Endothelial cell of umbilical vein (primary cell): ENCODE measurements at regions of chr6 and their contacts with region 1.

Region 1: GRCh38 chr6:43021270-43022047 is at the start of gene RRP36:
- DNase-seq: peak; percentile 67
- H3K4me3 ChIP-seq: peak within 1 kb of the TSS; percentile 74 to 98 (median 89)
- H3K27ac ChIP-seq: peak within 1 kb of the TSS; percentile 58
- H3K4me1 ChIP-seq: no peaks in the 10 kb centered on the region
- H3K27me3 ChIP-seq: no peaks in the 10 kb centered on the region
- CTCF ChIP-seq: no peak
- POLR2A ChIP-seq: peak; percentile 78
- total RNA-seq, gene RRP36: 103 TPM in 2 replicates

Region 2: DNA sequence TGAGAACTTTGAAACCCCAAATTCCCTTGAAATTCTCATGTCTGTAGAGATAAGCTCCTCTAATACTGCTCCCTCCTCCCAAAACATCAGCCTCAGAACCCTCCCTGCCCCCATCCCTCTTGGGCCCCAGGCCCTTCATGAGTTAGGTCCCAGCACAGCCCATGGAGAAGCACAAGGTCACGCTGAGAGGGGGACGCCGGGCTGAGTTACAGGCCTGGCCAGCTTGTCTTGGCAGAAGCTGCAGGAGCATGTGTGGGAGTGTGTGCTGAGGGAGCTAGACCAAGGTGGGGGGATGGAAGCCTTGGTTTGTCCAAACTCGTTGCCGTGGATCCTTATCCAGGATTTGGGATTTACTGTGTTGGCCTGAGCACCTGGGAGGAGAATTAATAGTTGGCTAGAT is 114.1 kb before region 1 on chr6:
- CTCF ChIA-PET with region 1: no interaction called
- POLR2A ChIA-PET with region 1: interaction called, 12 read pairs
- dilution Hi-C with region 1: no loop called
- intact Hi-C with region 1: no loop called
- DNase-seq: no peak
- H3K4me3 ChIP-seq: no peak overlapping the region
- H3K27ac ChIP-seq: no peak overlapping the region
- H3K4me1 ChIP-seq: no peaks in the 10 kb centered on the region
- H3K27me3 ChIP-seq: peaks cover 2 to 3% of the 10 kb centered on the region in 2 experiments
- CTCF ChIP-seq: no peak
- POLR2A ChIP-seq: no peak

Region 3: DNA sequence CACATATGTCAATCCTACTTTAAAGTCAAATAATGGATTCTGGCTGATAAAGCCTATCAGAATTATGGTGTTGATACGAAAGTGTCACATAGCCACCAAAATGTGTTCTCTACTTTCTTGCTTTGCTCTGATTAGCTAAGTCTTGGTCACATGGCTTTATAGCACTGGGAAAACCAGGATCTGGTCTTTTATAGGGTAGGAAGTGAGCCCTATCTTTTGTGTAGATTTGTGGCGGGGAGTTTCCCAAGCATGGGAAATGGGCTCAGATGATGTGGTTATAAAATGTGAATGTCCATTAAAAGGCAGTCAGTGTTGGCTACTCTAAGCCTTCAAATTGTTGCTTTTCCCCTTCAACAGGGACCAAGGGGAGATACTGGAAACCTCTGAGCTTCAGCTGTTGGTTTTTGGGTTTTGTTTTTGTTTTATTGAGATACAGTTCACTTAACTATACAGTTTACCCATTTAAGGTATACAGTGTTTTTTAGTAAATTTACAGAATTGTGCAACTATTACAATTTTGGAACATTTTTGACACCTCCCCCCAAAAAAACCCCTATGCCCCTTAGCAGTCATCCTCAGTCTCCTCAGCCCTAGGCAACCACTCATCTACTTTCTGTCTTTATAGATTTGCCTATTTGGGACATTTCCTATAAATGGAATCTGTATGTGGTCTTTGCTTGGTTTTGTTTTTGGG is 12.2 kb after region 1 on chr6:
- CTCF ChIA-PET with region 1: interaction called, 11 read pairs
- POLR2A ChIA-PET with region 1: interaction called, 3 read pairs
- dilution Hi-C with region 1: no loop called
- intact Hi-C with region 1: no loop called
- DNase-seq: no peak
- H3K4me3 ChIP-seq: no peak overlapping the region
- H3K27ac ChIP-seq: no peak overlapping the region
- H3K4me1 ChIP-seq: no peaks in the 10 kb centered on the region
- H3K27me3 ChIP-seq: no peaks in the 10 kb centered on the region
- CTCF ChIP-seq: no peak
- POLR2A ChIP-seq: no peak

Region 4: GRCh38 chr6:43053545-43054205 is 32.2 kb after region 1 on chr6 and contains the start of gene CUL7:
- CTCF ChIA-PET with region 1: interaction called, 4 read pairs
- POLR2A ChIA-PET with region 1: interaction called, 7 read pairs
- dilution Hi-C with region 1: no loop called
- intact Hi-C with region 1: loop called (anchors 2 kb)
- DNase-seq: peak; percentile 95
- H3K4me3 ChIP-seq: peak within 1 kb of the TSS; percentile 30 to 64 (median 40)
- H3K27ac ChIP-seq: peak within 1 kb of the TSS; percentile 82
- H3K4me1 ChIP-seq: peaks cover 16% of the 10 kb centered on the region
- H3K27me3 ChIP-seq: no peaks in the 10 kb centered on the region
- CTCF ChIP-seq: no peak
- POLR2A ChIP-seq: peak; percentile 99
- total RNA-seq, gene CUL7: 29.4 and 29.7 TPM in 2 replicates

Region 5: GRCh38 chr6:43059168-43060033 is 37.9 kb after region 1 on chr6 and contains the starts of genes KLC4 and MRPL2:
- CTCF ChIA-PET with region 1: no interaction called
- POLR2A ChIA-PET with region 1: interaction called, 4 read pairs
- dilution Hi-C with region 1: no loop called
- intact Hi-C with region 1: loop called (anchors 1 kb)
- DNase-seq: peak; percentile 100
- H3K4me3 ChIP-seq: peak within 1 kb of the TSS; percentile 80 to 96 (median 94)
- H3K27ac ChIP-seq: peak within 1 kb of the TSS; percentile 91
- H3K4me1 ChIP-seq: peaks cover 15% of the 10 kb centered on the region
- H3K27me3 ChIP-seq: no peaks in the 10 kb centered on the region
- CTCF ChIP-seq: no peak
- POLR2A ChIP-seq: peak; percentile 92
- total RNA-seq, gene KLC4: 26.8 and 26.9 TPM in 2 replicates
- total RNA-seq, gene MRPL2: 59.7 and 63.6 TPM in 2 replicates

Region 6: GRCh38 chr6:43667245-43668150 is 646.0 kb after region 1 on chr6:
- CTCF ChIA-PET with region 1: no interaction called
- POLR2A ChIA-PET with region 1: no interaction called
- dilution Hi-C with region 1: no loop called
- intact Hi-C with region 1: no loop called
- DNase-seq: peak; percentile 81
- H3K4me3 ChIP-seq: no peak overlapping the region
- H3K27ac ChIP-seq: no peak overlapping the region
- H3K4me1 ChIP-seq: peaks cover 5% of the 10 kb centered on the region
- H3K27me3 ChIP-seq: no peaks in the 10 kb centered on the region
- CTCF ChIP-seq: peak; percentile 91 to 98
- POLR2A ChIP-seq: no peak